ENCODE measurements at regions of chr2 and their contacts with region 1.

Region 1: GRCh38 chr2:229910832-229911412 is 10.9 kb downstream of the TRIP12 start:
- DNase-seq: peak; percentile 30
- ATAC-seq: peak; percentile 58
- H3K4me3 Mint-ChIP-seq: no peak overlapping the region
- H3K27ac Mint-ChIP-seq: no peak overlapping the region
- H3K4me1 Mint-ChIP-seq: peaks cover 42% of the 10 kb centered on the region
- H3K27me3 Mint-ChIP-seq: no peaks in the 10 kb centered on the region

Region 2: GRCh38 chr2:229780856-229781773 is 129.8 kb before region 1 on chr2:
- CTCF ChIA-PET with region 1: interaction called, 25 read pairs
- POLR2A ChIA-PET with region 1: no interaction called
- DNase-seq: no peak
- ATAC-seq: peak; percentile 75
- H3K4me3 Mint-ChIP-seq: no peak overlapping the region
- H3K27ac Mint-ChIP-seq: no peak overlapping the region
- H3K4me1 Mint-ChIP-seq: peaks cover 6% of the 10 kb centered on the region
- H3K27me3 Mint-ChIP-seq: no peaks in the 10 kb centered on the region

Region 3: GRCh38 chr2:229852565-229852964 is 58.4 kb before region 1 on chr2:
- CTCF ChIA-PET with region 1: interaction called, 12 read pairs
- POLR2A ChIA-PET with region 1: no interaction called
- DNase-seq: peak; percentile 63
- ATAC-seq: peak; percentile 94
- H3K4me3 Mint-ChIP-seq: no peak overlapping the region
- H3K27ac Mint-ChIP-seq: peak overlapping the region; percentile 5
- H3K4me1 Mint-ChIP-seq: peaks cover 38% of the 10 kb centered on the region
- H3K27me3 Mint-ChIP-seq: no peaks in the 10 kb centered on the region

Region 4: GRCh38 chr2:229921892-229922445 is 11.0 kb after region 1 on chr2 and contains the start of gene TRIP12:
- CTCF ChIA-PET with region 1: interaction called, 10 read pairs
- POLR2A ChIA-PET with region 1: interaction called, 3 read pairs
- DNase-seq: peak; percentile 90
- ATAC-seq: peak; percentile 82
- H3K4me3 Mint-ChIP-seq: peak within 1 kb of the TSS; percentile 99
- H3K27ac Mint-ChIP-seq: peak within 1 kb of the TSS; percentile 99
- H3K4me1 Mint-ChIP-seq: peaks cover 54% of the 10 kb centered on the region
- H3K27me3 Mint-ChIP-seq: no peaks in the 10 kb centered on the region
- total RNA-seq, gene TRIP12: 221 to 229 TPM